ENCODE measurements at regions of chr13 and their contacts with region 1.

Region 1: GRCh38 chr13:99990126-99990977 is 8.8 kb downstream of the ZIC2 start:
- DNase-seq: peak; percentile 31
- ATAC-seq: peak; percentile 73
- H3K4me3 Mint-ChIP-seq: peak overlapping the region; percentile 6
- H3K27ac Mint-ChIP-seq: no peak overlapping the region
- H3K4me1 Mint-ChIP-seq: peaks cover 27% of the 10 kb centered on the region
- H3K27me3 Mint-ChIP-seq: peaks cover 86% of the 10 kb centered on the region

Region 2: DNA sequence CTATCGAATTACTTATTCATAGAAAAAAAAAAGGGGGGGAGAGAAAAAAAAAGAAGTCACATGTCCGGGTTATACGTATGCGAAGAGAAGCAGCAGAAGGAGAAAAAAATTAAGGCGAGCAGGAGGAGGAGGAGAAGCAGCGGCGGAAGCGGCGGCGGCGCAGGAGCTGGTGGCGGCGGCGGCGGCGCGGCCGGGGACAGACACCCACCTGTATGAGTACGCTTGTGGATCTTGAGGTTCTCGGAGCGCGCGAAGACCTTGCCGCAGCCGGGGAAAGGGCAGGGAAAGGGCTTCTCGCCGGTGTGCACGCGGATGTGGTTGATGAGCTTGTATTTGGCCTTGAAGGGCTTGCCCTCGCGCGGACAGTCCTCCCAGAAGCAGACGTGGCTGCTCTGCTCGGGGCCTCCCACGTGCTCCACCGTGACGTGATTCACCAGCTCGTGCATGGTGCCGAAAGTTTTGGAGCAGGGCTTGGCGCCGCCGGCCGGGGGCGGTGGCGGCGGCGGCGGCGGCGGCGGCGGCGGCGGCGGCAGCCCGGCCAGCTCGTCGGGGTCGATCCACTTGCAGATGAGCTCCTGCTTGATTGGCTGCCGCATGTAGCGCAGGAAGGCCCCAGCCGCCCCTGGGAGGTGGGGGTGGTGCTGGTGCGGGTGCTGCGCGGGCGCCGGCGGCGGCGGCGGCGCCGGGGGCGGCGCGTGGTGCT is 20.3 kb before region 1 on chr13:
- CTCF ChIA-PET with region 1: interaction called, 6 read pairs
- POLR2A ChIA-PET with region 1: no interaction called
- intact Hi-C with region 1: loop called in 1 of 2 experiments (anchors 2 kb)
- DNase-seq: peak; percentile 63
- ATAC-seq: peak; percentile 54
- H3K4me3 Mint-ChIP-seq: peak overlapping the region; percentile 72
- H3K27ac Mint-ChIP-seq: no peak overlapping the region
- H3K4me1 Mint-ChIP-seq: peaks cover 17% of the 10 kb centered on the region
- H3K27me3 Mint-ChIP-seq: peaks cover 64% of the 10 kb centered on the region